Activated B cell treated with CpG ODN at 0.5 μM for 24 hours (primary cell): ENCODE measurements at regions of chr7 and their contacts with region 1.

Region 1: GRCh38 chr7:67343572-67343971 is 346.9 kb downstream of the TYW1 start:
- DNase-seq: no peak
- ATAC-seq: no peak
- H3K4me3 Mint-ChIP-seq: no peak overlapping the region
- H3K27ac Mint-ChIP-seq: no peak overlapping the region
- H3K4me1 Mint-ChIP-seq: no peaks in the 10 kb centered on the region
- H3K27me3 Mint-ChIP-seq: no peaks in the 10 kb centered on the region
- CTCF ChIP-seq: no peak

Region 2: DNA sequence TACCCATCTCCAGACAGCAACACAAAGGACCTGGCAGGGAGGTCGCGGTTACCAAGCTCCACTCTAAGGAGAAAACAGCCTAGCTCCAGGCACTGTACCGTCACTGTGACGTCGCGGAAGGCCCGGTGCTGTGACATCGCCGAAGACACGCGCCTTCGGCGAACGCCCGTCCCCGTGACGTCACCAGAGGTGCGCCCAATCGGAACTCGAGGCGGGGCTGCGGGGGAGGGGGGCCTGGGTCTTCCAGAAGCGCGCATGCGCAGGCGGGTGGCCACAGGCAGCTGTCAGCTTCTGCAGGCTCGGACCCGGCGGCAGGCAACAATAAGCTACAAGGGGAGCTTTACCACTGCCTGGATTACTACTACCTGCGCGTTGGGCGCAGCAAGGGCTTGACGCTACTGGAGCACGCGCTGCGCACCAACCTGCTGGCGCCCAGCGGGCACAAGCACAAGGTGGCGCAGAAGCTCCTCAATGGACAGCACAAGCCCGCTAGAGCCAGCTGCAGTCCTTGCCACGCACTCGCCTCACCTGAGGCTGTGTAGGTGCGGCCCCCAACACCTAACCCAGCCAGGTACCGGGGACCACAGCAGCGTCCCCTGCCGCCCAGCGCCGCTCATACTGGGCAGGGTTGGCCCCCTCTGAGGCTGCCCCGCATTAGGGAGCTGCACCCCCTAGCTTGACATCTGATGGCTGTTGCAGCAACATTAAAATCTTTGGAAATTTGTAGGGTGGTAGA is 930.0 kb before region 1 on chr7:
- CTCF ChIA-PET with region 1: no interaction called
- POLR2A ChIA-PET with region 1: interaction called, 12 read pairs
- intact Hi-C with region 1: no loop called
- DNase-seq: peak; percentile 67
- ATAC-seq: peak; percentile 78
- H3K4me3 Mint-ChIP-seq: peak overlapping the region; percentile 80
- H3K27ac Mint-ChIP-seq: peak overlapping the region; percentile 41
- H3K4me1 Mint-ChIP-seq: peaks cover 13% of the 10 kb centered on the region
- H3K27me3 Mint-ChIP-seq: no peaks in the 10 kb centered on the region
- CTCF ChIP-seq: no peak

Region 3: DNA sequence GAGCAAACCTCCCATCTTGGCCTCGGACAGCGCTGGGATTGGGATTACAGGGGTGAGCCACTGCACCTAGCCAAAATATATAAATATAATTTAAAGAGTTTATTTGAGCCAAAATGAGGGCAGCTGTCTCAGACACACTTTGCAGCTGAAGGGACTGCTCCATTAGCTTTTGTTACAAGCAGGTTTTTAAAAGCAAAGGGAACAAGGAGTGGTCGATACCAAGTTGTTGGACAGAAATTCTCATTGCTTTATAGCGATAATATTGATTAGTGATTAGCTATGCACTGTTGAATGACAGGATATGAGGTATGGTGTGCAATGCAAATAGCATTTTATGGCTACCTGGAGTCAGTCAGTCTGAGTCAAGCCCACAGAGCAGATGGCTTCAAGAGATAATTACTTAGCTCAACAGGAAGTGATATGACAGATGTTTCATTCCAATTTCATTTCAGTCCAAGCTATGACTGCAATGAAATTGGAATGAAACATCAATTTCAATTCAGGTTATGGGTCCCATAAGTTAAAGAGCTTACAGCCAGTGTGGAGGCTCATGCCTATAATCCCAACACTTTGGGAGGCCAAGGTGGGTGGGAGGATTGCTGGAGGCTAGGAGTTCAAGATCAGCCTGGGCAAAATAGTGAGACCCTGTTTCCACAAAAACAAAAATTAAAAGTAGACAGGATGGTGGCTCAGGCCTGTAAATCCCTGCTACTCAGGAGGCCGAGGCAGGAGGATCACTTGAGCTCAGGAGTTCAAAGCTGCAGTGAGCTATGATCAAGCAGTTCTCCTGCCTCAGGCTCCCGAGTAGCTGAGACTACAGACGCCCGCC is 323.8 kb before region 1 on chr7:
- CTCF ChIA-PET with region 1: no interaction called
- POLR2A ChIA-PET with region 1: no interaction called
- intact Hi-C with region 1: no loop called
- DNase-seq: no peak
- ATAC-seq: no peak
- H3K4me3 Mint-ChIP-seq: no peak overlapping the region
- H3K27ac Mint-ChIP-seq: no peak overlapping the region
- H3K4me1 Mint-ChIP-seq: no peaks in the 10 kb centered on the region
- H3K27me3 Mint-ChIP-seq: no peaks in the 10 kb centered on the region
- CTCF ChIP-seq: no peak

Region 4: GRCh38 chr7:67359900-67360299 is 16.3 kb after region 1 on chr7:
- CTCF ChIA-PET with region 1: no interaction called
- POLR2A ChIA-PET with region 1: no interaction called
- intact Hi-C with region 1: no loop called
- DNase-seq: no peak
- ATAC-seq: no peak
- H3K4me3 Mint-ChIP-seq: no peak overlapping the region
- H3K27ac Mint-ChIP-seq: no peak overlapping the region
- H3K4me1 Mint-ChIP-seq: no peaks in the 10 kb centered on the region
- H3K27me3 Mint-ChIP-seq: no peaks in the 10 kb centered on the region
- CTCF ChIP-seq: no peak